ENCODE measurements at regions of chrX and their contacts with region 1.

Region 1: GRCh38 chrX:110412971-110413721 is 54.5 kb downstream of the RTL9 start:
- DNase-seq: peak; percentile 61 to 73
- H3K4me3 ChIP-seq: no peak overlapping the region
- H3K27ac ChIP-seq: no peak overlapping the region
- H3K4me1 ChIP-seq: peaks cover 0 to 3% of the 10 kb centered on the region in 2 donors
- H3K27me3 ChIP-seq: no peaks in the 10 kb centered on the region
- CTCF ChIP-seq: peak; percentile 58 to 80 (median 67)
- POLR2A ChIP-seq: no peak

Region 2: DNA sequence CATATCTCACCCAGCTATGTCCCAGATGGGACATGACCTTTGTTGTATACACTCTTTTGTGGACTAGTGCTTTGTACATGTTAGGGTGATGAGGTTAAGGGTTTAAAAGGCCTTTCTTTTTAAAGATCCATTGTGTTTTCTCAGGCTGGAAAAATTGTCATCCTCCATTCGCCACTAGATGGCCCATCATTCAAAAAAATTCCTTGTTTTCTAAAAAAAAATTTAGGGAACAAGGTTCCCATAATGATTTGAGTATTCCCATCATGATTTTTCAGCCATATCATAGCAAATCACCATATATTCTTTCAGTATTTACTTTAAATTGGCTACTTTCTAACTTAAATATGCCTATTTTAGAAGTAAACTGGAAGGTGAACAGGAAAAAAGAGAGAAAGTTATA is 502.1 kb before region 1 on chrX:
- intact Hi-C with region 1: loop called (anchors 10 kb)
- DNase-seq: no peak
- H3K4me3 ChIP-seq: no peak overlapping the region
- H3K27ac ChIP-seq: no peak overlapping the region
- H3K4me1 ChIP-seq: no peaks in the 10 kb centered on the region
- H3K27me3 ChIP-seq: no peaks in the 10 kb centered on the region
- CTCF ChIP-seq: peak in 5 of 6 experiments; percentile 9 to 55 (median 45)
- POLR2A ChIP-seq: no peak

Region 3: DNA sequence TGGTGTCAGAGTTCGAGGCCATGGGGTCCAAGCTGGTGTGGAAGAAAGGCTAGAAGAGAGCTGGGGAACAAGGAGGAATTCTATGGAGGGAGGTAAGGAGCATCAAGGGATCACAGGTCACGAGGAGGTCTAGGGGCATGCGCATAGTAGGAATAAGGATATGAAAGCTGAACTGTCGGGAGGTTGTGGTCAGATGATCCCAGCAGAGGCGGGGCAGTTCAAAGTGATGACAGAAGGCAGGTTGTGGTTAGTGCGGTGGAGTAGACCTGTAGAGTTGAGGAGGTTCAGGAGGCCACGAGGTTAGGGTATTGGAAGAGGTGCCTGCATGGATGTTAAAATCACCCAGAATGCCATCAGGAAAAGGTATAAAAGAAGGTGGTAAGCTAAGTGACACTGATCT is 253.9 kb before region 1 on chrX:
- intact Hi-C with region 1: loop called (anchors 2 kb)
- DNase-seq: no peak
- H3K4me3 ChIP-seq: no peak overlapping the region
- H3K27ac ChIP-seq: no peak overlapping the region
- H3K4me1 ChIP-seq: peaks cover 0 to 4% of the 10 kb centered on the region in 2 donors
- H3K27me3 ChIP-seq: no peaks in the 10 kb centered on the region
- CTCF ChIP-seq: no peak
- POLR2A ChIP-seq: no peak

Region 4: GRCh38 chrX:110558406-110558805 is 145.3 kb after region 1 on chrX:
- intact Hi-C with region 1: no loop called
- DNase-seq: no peak
- H3K4me3 ChIP-seq: no peak overlapping the region
- H3K27ac ChIP-seq: no peak overlapping the region
- H3K4me1 ChIP-seq: no peaks in the 10 kb centered on the region
- H3K27me3 ChIP-seq: no peaks in the 10 kb centered on the region
- CTCF ChIP-seq: no peak
- POLR2A ChIP-seq: no peak

Measured in thyroid gland (tissue), 4 donors.